GM23248 (cell line): ENCODE measurements at regions of chr1 and their contacts with region 1.

Region 1: GRCh38 chr1:16607433-16607851 is 5.9 kb downstream of the NBPF1 start:
- DNase-seq: no peak
- H3K4me3 ChIP-seq: no peak overlapping the region
- H3K27ac ChIP-seq: no peak overlapping the region
- H3K4me1 ChIP-seq: peaks cover 10% of the 10 kb centered on the region
- H3K27me3 ChIP-seq: no peaks in the 10 kb centered on the region

Region 2: DNA sequence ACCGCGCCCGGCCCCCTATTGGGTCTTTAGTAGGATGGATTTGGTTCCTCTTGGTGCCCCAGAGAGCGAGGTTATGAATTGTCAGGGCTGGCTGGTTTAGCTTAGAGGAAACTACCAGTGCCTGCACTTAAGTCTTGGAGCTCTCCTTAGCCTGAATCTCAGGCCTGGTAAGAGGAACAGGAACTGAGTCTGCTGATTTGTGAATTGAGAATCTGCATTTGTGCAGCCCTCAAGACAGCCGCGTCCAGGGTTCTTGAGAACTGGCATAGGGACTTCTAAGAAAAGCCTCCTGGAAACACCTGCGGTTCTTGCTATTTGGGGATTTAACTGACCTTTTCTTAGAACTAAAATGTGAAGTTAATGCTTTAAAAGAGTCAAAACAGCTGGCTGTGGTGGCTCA is 165.2 kb before region 1 on chr1:
- in situ Hi-C with region 1: no loop called
- DNase-seq: no peak
- H3K4me3 ChIP-seq: peak overlapping the region; percentile 100
- H3K27ac ChIP-seq: no peak overlapping the region
- H3K4me1 ChIP-seq: no peaks in the 10 kb centered on the region
- H3K27me3 ChIP-seq: no peaks in the 10 kb centered on the region

Region 3: GRCh38 chr1:16946646-16947045 is 339.2 kb after region 1 on chr1:
- in situ Hi-C with region 1: loop called (anchors 10 kb)
- DNase-seq: no peak
- H3K4me3 ChIP-seq: no peak overlapping the region
- H3K27ac ChIP-seq: no peak overlapping the region
- H3K4me1 ChIP-seq: peaks cover 5% of the 10 kb centered on the region; the same call in 1 of the 2 replicates
- H3K27me3 ChIP-seq: no peaks in the 10 kb centered on the region